CD4-positive, alpha-beta T cell (primary cell): ENCODE measurements at regions of chr4 and their contacts with region 1.

Region 1: DNA sequence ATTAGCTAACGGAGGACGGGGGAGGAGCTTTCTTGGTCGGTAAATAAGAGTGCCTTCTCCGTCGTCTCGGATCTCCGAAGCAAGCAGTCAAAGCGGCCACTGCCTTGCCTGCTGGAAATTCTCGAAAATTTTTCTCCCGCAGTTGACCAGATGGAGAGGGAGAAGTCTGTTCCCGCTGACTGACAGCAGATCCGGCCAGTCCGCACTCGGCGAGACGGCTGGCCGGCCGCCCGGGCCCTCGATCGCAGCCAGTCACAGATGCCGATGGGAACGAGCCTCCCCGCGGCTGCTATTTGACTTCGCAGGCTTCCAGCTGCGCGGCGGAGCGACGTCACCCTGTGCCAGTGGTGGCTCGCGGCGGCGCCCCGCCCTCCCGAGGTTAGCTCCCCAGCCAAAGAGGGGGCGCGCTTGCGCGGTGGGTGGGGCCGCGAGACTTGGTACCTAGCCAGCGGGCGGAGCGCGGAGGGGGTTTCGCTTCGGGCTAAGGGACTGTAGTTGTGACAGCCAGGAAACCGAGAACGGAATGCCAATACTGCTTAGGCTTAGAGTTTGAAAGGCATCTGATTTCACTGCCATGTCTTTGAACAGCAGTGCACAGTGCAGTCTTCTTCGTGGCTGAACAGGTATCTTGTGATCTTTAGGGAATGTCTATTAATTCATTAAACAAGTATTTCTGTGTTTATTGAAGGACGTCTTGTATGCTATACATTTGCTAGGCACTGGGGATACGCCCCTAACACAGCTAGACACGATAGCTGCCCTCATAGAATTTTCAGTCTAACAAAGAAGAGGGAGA is at the start of gene PPM1K:
- DNase-seq: peak; percentile 98 to 100 (median 99)
- ATAC-seq: peak; percentile 79
- H3K4me3 ChIP-seq: peak within 1 kb of the TSS; percentile 90
- H3K4me3 Mint-ChIP-seq: peak within 1 kb of the TSS; percentile 95
- H3K27ac ChIP-seq: peak within 1 kb of the TSS; percentile 98
- H3K27ac Mint-ChIP-seq: peak within 1 kb of the TSS; percentile 99
- H3K4me1 ChIP-seq: peaks cover 30% of the 10 kb centered on the region
- H3K4me1 Mint-ChIP-seq: peaks cover 45% of the 10 kb centered on the region
- H3K27me3 ChIP-seq: no peaks in the 10 kb centered on the region
- H3K27me3 Mint-ChIP-seq: no peaks in the 10 kb centered on the region
- CTCF ChIP-seq: peak; percentile 9
- total RNA-seq, gene PPM1K: 71.0 to 78.1 TPM

Region 2: DNA sequence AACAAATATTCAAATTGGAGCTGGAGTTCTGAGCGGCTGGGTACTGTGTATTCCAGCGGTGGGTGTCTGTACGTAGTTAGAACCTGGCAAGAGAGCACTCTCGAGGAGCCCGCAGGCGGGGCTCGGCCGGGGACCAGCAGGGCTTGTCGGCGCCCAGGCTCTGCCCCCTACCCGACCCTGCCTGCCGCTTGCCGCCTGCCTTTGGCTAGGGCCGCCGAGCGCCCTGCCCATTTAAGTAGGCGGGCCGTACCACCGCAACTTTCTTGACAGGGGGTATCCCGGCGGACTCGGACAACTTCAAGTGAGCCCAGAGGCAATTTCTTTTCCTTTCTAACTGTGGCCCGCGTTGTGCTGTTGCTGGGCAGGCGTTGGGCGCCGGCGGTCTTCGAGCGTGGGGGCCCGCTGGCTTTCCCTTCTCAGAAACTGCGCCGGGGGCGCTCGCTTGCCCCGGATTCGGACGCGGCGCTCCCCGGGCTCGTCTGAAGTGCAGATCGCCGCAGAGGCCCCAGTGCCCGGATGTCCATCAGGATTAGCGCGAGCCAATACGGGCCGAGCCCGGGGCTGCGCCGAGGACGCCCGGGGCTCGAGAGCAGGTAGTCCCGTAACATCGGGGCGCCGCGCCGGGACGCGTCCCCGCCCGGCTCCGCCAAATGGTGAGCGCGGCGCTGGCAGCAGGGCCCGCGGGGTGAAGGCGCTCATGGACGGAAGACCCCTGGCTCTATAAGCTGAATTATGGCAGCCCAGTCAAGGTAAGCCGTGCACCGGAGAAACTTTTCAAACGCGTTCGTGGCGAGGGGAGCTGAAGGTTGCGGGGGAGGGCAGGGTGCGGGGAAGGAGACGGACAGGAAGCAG is 1277.7 kb before region 1 on chr4:
- CTCF ChIA-PET with region 1: no interaction called
- POLR2A ChIA-PET with region 1: interaction called, 13 read pairs
- intact Hi-C with region 1: no loop called
- DNase-seq: peak; percentile 82 to 95 (median 88)
- ATAC-seq: peak; percentile 25
- H3K4me3 ChIP-seq: peak overlapping the region; percentile 89
- H3K4me3 Mint-ChIP-seq: peak overlapping the region; percentile 90
- H3K27ac ChIP-seq: peak overlapping the region; percentile 83 to 90
- H3K27ac Mint-ChIP-seq: peak overlapping the region; percentile 96
- H3K4me1 ChIP-seq: peaks cover 24% of the 10 kb centered on the region
- H3K4me1 Mint-ChIP-seq: peaks cover 58% of the 10 kb centered on the region
- H3K27me3 ChIP-seq: no peaks in the 10 kb centered on the region
- H3K27me3 Mint-ChIP-seq: no peaks in the 10 kb centered on the region
- CTCF ChIP-seq: peak; percentile 65

Region 3: DNA sequence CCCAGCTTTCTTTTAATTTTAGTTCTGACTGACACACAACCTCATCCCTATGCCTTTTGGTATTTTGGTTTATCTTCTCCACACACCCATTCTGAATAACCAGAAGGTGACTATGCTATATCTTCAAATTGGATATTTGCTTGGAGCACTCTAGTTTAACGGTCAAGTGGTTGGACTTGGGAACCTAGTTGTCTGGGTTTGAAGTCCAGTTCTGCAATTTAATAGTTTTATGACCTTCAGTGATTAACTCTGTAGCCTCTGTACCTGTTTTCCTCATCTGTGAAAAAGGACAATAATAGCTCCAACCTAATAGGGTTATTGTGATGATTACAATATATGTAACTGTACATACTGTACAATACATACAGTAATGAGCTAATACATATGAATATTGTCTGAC is 20.3 kb before region 1 on chr4:
- CTCF ChIA-PET with region 1: no interaction called
- POLR2A ChIA-PET with region 1: interaction called, 14 read pairs
- intact Hi-C with region 1: no loop called
- DNase-seq: no peak
- ATAC-seq: no peak
- H3K4me3 ChIP-seq: no peak overlapping the region
- H3K4me3 Mint-ChIP-seq: no peak overlapping the region
- H3K27ac ChIP-seq: no peak overlapping the region
- H3K27ac Mint-ChIP-seq: no peak overlapping the region
- H3K4me1 ChIP-seq: no peaks in the 10 kb centered on the region
- H3K4me1 Mint-ChIP-seq: no peaks in the 10 kb centered on the region
- H3K27me3 ChIP-seq: no peaks in the 10 kb centered on the region
- H3K27me3 Mint-ChIP-seq: no peaks in the 10 kb centered on the region
- CTCF ChIP-seq: no peak

Region 4: DNA sequence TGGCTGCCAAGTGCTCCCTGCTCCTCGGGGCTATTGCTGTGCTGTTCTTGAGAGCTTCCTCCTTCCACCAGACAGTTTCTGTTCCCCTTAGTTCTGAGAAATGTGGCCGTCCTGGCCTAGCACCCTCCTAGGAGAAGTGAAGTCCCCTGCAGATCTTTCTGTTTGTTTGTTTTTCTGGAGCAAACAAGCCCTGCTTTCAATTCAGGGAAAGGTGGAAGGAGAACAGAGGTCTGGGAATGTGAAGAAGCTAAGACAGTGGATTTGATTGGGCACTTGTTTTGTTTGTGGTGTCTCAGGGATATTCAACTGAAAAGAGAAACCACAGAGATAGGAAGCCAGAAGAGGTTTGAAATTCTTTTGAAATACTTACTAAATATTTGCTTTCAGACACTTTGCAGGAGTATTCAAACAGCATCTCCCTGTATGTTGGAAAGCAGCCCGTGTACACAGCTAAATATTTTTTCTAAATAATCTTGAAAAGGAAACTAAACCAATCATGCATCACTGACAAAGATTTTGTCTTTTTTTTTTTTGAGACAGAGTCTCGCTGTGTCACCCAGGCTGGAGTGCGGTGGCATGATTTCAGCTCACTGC is 36.2 kb after region 1 on chr4:
- CTCF ChIA-PET with region 1: no interaction called
- POLR2A ChIA-PET with region 1: interaction called, 51 read pairs
- intact Hi-C with region 1: loop called in 1 of 2 experiments (anchors 1 kb)
- DNase-seq: peak in 10 of 14 experiments; percentile 4 to 55 (median 22)
- ATAC-seq: peak; percentile 75
- H3K4me3 ChIP-seq: peak overlapping the region; percentile 10
- H3K4me3 Mint-ChIP-seq: peak overlapping the region; percentile 82
- H3K27ac ChIP-seq: peak overlapping the region; percentile 10 to 47
- H3K27ac Mint-ChIP-seq: peak overlapping the region; percentile 84
- H3K4me1 ChIP-seq: peaks cover 12% of the 10 kb centered on the region
- H3K4me1 Mint-ChIP-seq: peaks cover 21% of the 10 kb centered on the region
- H3K27me3 ChIP-seq: no peaks in the 10 kb centered on the region
- H3K27me3 Mint-ChIP-seq: no peaks in the 10 kb centered on the region
- CTCF ChIP-seq: no peak

Region 5: GRCh38 chr4:88442703-88443191 is 158.1 kb after region 1 on chr4:
- CTCF ChIA-PET with region 1: no interaction called
- POLR2A ChIA-PET with region 1: interaction called, 13 read pairs
- intact Hi-C with region 1: no loop called
- DNase-seq: no peak
- ATAC-seq: no peak
- H3K4me3 ChIP-seq: no peak overlapping the region
- H3K4me3 Mint-ChIP-seq: no peak overlapping the region
- H3K27ac ChIP-seq: no peak overlapping the region
- H3K27ac Mint-ChIP-seq: no peak overlapping the region
- H3K4me1 ChIP-seq: no peaks in the 10 kb centered on the region
- H3K4me1 Mint-ChIP-seq: no peaks in the 10 kb centered on the region
- H3K27me3 ChIP-seq: no peaks in the 10 kb centered on the region
- H3K27me3 Mint-ChIP-seq: no peaks in the 10 kb centered on the region
- CTCF ChIP-seq: no peak

Region 6: GRCh38 chr4:88591787-88592599 is 307.4 kb after region 1 on chr4 and contains the start of gene HERC3:
- CTCF ChIA-PET with region 1: no interaction called
- POLR2A ChIA-PET with region 1: interaction called, 32 read pairs
- intact Hi-C with region 1: loop called (anchors 5 kb)
- DNase-seq: peak; percentile 76 to 95 (median 86)
- ATAC-seq: peak; percentile 84
- H3K4me3 ChIP-seq: peak within 1 kb of the TSS; percentile 96
- H3K4me3 Mint-ChIP-seq: peak within 1 kb of the TSS; percentile 100
- H3K27ac ChIP-seq: peak within 1 kb of the TSS; percentile 83 to 93
- H3K27ac Mint-ChIP-seq: peak within 1 kb of the TSS; percentile 99
- H3K4me1 ChIP-seq: peaks cover 23% of the 10 kb centered on the region
- H3K4me1 Mint-ChIP-seq: peaks cover 60% of the 10 kb centered on the region
- H3K27me3 ChIP-seq: no peaks in the 10 kb centered on the region
- H3K27me3 Mint-ChIP-seq: no peaks in the 10 kb centered on the region
- CTCF ChIP-seq: no peak
- total RNA-seq, gene HERC3: 63.1 to 66.4 TPM